PC-3 (cell line): ENCODE measurements at regions of chr1 and their contacts with region 1.

Region 1: DNA sequence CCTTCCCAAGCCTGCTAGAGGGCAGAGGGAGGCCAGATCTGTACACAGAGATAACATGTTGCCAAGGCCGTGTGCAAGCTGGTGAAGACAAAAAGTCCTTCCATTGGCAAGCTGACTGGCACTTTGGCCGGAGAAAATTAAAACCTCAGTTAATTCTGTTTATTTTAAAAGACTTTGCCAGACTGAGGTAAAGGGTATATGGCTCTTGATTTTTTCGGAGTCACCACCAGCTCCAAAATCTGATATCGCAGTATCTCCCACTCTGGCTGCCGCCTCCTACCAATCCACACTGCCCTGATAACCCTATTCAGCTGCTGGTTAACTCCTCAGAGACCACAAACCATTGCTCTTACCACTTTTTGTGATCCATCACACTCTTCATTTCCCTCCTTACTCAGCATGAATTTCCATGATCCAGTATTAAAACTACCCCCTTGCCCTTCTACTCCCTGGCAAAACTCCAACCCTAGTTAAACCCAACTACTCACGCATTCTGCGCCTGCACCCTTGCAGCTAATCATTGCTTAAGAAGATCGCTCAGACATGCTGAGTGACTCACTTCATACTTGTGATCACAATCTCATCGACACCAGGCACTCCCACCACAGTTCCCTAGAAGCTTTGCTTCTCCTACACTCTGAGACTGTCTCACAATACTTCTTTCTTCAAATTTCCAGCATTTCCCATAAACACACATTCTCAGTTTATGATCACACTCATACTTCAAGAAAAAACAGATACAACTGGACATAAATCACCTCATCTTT is 5.8 kb upstream of the PPP1R15B start:
- DNase-seq: peak; percentile 99
- ATAC-seq: peak; percentile 85
- H3K4me3 ChIP-seq: peak overlapping the region; percentile 61
- H3K27ac ChIP-seq: peak overlapping the region; percentile 95
- H3K4me1 ChIP-seq: peaks cover 52% of the 10 kb centered on the region
- H3K27me3 ChIP-seq: no peaks in the 10 kb centered on the region
- CTCF ChIP-seq: no peak

Region 2: DNA sequence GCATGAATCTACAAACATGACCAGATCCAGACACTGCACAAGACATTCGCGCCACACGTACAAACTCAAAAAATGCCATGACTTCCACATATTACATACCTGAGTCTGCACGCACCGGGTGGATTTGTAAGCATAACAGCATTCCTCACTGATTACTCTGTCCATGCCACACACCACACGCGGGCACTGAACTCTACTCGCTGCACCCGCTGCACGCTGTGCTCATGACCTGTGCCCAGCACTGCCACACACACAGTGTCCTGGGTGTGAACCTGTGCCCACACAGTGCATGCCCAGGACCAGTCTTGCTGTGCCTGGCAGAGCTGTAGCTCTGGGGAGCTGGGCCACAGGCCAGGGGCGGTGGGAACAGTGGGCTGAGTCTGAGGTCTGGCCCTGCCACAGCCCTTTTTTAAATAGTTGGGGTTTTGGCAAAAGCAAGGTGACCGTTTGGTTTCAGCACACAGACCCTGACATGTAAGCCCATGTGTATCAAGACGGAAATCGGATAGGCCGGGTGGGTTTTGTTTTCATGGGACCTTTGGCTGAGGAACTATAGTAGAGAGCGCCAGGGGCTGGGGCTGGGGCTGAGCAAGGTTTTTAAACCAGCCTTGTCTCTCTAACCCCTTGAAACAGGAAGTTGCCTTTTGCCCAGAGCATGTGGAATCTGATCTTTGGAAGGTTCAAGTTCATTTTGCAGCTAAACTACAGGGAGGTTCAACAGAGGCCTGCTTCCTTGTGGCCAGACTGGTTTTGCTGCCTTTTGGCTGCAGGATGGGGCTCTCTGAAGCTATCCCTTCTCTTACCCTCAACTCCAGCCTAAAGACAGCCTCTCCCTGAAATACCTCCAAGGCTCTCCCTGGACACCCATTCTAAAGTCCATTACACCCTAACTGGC is 191.3 kb before region 1 on chr1:
- CTCF ChIA-PET with region 1: no interaction called
- POLR2A ChIA-PET with region 1: no interaction called
- intact Hi-C with region 1: no loop called
- DNase-seq: peak; percentile 93
- ATAC-seq: peak; percentile 82
- H3K4me3 ChIP-seq: peak overlapping the region; percentile 45; the same call in 1 of the 2 replicates
- H3K27ac ChIP-seq: peak overlapping the region; percentile 91
- H3K4me1 ChIP-seq: peaks cover 39% of the 10 kb centered on the region
- H3K27me3 ChIP-seq: no peaks in the 10 kb centered on the region
- CTCF ChIP-seq: no peak

Region 3: GRCh38 chr1:204398217-204399081 is 19.0 kb before region 1 on chr1:
- CTCF ChIA-PET with region 1: interaction called, 18 read pairs
- POLR2A ChIA-PET with region 1: interaction called, 3 read pairs
- intact Hi-C with region 1: no loop called
- DNase-seq: peak; percentile 100
- ATAC-seq: peak; percentile 100
- H3K4me3 ChIP-seq: no peak overlapping the region
- H3K27ac ChIP-seq: no peak overlapping the region
- H3K4me1 ChIP-seq: peaks cover 4% of the 10 kb centered on the region; the same call in 1 of the 2 replicates
- H3K27me3 ChIP-seq: no peaks in the 10 kb centered on the region
- CTCF ChIP-seq: peak; percentile 99

Region 4: DNA sequence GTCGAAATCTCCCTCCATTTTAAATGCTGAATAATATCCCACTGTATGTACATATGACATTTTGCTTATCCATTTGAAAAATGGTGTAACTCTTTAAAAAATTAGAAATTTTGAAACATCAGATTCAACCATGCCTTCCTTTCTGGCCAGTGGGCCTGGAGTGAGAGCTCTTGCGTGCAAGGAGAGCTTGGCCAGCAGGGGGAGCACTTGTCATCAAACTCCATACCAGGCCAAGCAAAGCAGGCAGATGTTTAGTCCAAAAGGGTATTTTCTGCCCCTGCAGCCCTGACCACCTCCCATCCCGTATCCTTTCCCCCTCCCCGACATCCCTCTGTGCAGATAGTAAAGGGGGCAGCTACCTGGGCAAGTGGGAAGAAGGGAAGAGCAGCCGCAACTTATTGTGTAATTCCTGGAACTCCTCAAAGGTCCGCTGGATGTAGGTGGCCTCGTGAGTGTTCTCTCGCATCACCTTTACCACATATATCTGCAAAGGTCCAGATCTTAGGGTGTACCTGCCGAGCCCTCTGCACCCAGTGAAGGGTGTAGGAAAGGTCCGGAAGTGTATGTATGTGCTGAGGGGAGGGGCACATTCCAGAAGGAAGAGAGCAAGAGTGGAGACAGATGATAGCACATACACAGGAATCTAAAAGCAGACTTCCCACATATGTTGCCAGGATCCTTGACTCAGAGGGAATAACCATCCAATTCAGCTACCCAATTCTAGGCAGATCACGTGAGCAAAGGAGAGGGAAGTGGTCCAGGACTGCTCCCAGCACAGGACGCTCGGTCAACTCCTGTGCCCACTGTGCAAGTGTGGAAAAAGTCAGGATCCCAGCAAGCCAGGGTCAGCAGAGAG is 14.1 kb after region 1 on chr1:
- CTCF ChIA-PET with region 1: interaction called, 14 read pairs
- POLR2A ChIA-PET with region 1: interaction called, 3 read pairs
- intact Hi-C with region 1: no loop called
- DNase-seq: peak; percentile 93
- ATAC-seq: peak; percentile 96
- H3K4me3 ChIP-seq: no peak overlapping the region
- H3K27ac ChIP-seq: no peak overlapping the region
- H3K4me1 ChIP-seq: peaks cover 10% of the 10 kb centered on the region
- H3K27me3 ChIP-seq: no peaks in the 10 kb centered on the region
- CTCF ChIP-seq: peak; percentile 100

Region 5: DNA sequence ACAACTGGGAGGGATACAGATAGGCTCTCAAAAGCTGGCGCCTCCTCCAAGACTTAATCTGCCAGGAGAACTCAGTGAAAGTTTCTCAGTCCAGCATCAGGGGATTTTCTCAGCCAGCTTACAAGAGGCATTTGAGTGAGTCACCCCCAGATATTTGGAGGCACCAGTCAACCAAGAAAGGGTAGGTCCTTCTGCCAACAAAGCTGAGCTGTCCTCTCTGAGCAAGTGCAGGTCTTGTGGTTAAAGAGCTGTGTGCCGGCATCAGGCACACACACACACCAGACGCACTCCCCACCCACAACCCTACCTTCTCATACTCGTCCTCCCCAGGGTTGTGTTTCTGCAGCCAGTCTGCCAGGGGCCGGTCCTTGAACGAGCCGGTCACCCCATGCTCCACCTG is 21.2 kb after region 1 on chr1:
- CTCF ChIA-PET with region 1: interaction called, 3 read pairs
- POLR2A ChIA-PET with region 1: no interaction called
- intact Hi-C with region 1: loop called (anchors 2 kb)
- DNase-seq: peak; percentile 99
- ATAC-seq: peak; percentile 96
- H3K4me3 ChIP-seq: peak overlapping the region; percentile 35; the same call in 1 of the 2 replicates
- H3K27ac ChIP-seq: peak overlapping the region; percentile 73
- H3K4me1 ChIP-seq: peaks cover 43% of the 10 kb centered on the region
- H3K27me3 ChIP-seq: no peaks in the 10 kb centered on the region
- CTCF ChIP-seq: no peak

Region 6: DNA sequence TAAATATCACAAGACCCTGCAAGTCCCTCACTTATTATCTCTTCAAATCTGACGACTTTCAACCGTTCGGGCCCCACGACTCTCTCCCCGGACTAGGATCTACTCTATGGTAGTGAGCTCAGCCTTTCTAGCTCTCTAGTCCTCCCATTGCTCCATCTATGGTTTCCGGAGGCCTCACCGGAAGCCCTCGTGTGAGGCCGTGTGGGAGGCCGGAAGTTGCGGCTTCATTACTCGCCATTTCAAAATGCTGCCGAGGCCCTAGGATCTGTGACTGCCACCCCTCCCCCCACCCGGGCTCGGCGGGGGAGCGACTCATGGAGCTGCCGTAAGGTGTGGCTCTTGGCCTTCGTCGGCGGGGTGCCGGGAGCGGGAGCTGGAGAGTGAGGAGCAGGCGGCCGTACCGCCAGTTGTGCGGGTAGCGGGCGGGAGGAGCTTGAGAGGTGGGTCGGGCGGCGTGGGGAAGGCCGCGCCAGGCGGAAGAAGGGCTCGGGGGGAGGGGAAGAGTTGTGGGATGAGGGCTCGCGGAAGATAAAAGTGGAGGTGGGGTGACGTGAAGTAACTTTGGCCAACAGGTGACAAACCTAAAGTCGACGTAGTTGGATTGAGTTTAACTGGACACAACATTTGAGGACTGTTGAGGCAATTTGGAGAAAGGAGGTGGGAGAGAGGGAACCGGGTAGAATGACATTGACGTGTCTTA is 98.9 kb after region 1 on chr1 and contains the start of gene MDM4:
- CTCF ChIA-PET with region 1: no interaction called
- POLR2A ChIA-PET with region 1: interaction called, 11 read pairs
- intact Hi-C with region 1: no loop called
- DNase-seq: peak; percentile 100
- ATAC-seq: peak; percentile 98
- H3K4me3 ChIP-seq: peak within 1 kb of the TSS; percentile 69
- H3K27ac ChIP-seq: peak within 1 kb of the TSS; percentile 86
- H3K4me1 ChIP-seq: peaks cover 14% of the 10 kb centered on the region
- H3K27me3 ChIP-seq: no peaks in the 10 kb centered on the region
- CTCF ChIP-seq: no peak
- total RNA-seq, gene MDM4: 36.3 and 55.7 TPM in 2 replicates